Activated T-helper 2 cell treated with anti-CD3 and anti-CD28 coated beads, Interferon-gamma antibody, Interleukin-2, Interleukin-4, amounts not matched to agents 10 μg/mL and 5 μg/mL and 100 μg/mL, durations not matched to agents 14 hours and 24 hours and 36 hours (primary cell): ENCODE measurements at regions of chr22 and their contacts with region 1.

Region 1: DNA sequence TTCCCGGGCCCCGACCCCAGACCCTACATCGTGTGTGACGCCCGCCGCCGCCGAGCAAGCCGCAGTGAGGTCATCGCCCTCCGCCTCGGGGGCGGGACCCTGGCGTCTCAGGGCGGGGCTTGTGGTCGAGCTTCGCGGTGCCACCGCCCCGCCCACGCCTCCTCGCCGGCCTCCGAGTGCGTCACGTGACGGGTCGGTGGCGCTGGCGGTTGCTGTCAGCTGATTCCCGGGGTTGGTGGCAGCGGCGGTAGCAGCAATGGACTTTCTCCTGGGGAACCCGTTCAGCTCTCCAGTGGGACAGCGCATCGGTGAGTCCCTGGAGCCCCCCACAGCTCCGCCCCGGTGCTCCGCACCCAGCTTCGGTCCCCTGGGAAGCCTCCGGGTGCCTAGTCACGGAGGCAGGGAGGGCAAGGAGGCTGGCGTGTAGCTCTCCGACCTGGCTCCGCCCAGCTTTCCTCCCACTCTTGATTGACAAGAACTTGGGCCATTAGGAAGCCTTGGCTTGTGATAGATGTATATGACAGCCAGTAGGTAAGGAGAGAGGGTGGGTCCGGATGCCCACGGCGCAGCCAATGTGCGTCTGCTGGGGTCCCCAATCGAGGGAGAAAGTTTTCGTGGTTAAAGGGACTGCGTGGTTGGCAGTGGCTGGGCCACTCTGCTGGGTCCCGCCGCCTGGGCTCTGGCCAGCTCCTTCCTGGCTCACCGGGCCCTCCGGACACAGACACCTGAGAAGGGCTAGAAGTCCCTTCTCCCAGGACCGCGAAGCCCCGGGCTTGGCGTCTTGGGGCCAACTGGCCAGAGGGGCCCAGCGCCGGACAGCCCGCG is at the start of gene TOM1:
- DNase-seq: peak; percentile 95
- H3K4me3 Mint-ChIP-seq: peak within 1 kb of the TSS; percentile 84
- H3K27ac Mint-ChIP-seq: peak within 1 kb of the TSS; percentile 90
- H3K4me1 Mint-ChIP-seq: peaks cover 42% of the 10 kb centered on the region
- H3K27me3 Mint-ChIP-seq: no peaks in the 10 kb centered on the region
- total RNA-seq, gene TOM1: 21.2 and 23.6 TPM in 2 replicates

Region 2: DNA sequence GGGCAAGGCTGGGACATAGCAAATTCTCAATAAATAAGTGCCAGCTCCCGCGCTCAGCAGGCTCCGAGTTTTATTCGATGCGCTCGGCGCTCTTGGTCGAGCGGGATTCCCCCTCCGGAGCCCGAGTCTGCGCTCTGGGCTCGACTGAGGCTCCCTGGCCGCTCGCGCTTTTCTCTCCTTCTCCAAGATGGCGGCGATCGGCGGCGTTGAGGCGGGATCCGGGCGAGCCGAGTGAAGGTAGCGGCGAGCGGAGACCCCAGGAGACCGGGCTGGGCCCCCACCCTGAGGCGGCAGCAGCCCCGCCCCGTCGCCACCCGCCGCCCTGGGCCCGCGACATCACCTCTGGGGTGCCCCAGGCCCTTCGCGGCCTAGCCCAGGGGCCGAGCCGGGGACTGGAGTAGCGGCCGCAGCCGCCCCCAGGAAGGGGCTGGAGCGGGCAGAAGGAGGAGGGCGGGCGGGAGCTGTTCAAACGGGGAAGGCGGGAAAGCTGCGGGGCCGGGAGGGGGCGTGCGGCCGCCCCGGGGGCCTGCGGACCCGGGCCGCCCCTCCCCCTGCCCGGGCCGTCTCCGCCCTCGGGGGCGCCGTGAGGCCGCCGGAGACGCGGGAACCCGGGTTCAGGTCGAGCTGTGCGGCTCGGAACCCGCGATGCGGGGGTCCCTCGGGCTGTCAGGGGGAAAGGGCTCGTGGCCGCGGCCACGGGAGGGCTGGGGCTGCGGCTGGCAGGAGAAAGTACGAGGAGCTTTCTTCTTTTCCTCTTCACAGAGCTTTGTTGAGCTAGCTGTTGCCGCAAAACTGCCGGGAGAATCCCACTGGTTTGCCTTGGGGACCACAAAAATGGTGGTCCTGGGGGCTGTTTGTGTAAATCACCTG is 42.3 kb before region 1 on chr22 and contains the start of gene HMGXB4:
- intact Hi-C with region 1: loop called (anchors 2 kb)
- DNase-seq: peak; percentile 83
- H3K4me3 Mint-ChIP-seq: peak within 1 kb of the TSS; percentile 90
- H3K27ac Mint-ChIP-seq: peak within 1 kb of the TSS; percentile 92
- H3K4me1 Mint-ChIP-seq: peaks cover 34% of the 10 kb centered on the region
- H3K27me3 Mint-ChIP-seq: no peaks in the 10 kb centered on the region
- total RNA-seq, gene HMGXB4: 41.8 and 42.3 TPM in 2 replicates

Region 3: DNA sequence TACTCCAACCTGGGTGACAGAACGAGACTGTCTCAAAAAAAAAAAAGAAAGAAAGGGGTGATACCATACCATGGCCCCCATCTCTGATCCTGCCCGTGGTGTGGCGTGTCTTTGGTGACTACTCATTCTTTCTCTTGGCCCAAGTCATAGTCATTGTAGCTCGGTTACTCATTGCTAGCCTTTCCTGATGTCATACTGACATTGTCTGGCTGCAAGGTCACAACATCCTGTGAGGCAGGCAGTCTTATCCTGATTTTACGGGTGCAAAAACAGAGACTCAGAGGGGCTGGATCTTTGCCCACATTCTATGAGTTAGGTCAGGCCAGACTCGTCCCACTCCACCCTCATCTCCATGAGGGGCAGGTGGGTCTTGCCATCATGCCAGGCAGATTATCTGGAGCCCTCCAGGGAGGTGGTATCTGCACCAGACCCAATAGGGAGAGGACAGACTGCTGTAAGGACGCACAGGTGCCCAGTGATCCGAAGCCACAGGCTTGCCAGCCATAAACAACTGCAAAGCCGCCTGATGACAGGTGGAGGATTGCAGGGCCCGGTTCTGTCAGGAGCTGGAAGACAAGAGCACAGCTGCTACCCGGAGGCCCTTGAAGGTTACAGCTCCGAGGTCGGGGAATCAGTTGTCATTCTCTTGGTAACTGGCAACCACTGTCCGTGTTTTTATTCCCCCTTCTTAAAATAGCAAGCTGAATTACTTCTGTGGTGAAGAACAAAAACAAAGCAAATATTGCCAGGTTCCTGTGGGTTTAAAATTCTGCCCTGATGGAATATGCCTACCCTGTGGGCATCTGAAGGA is 13.6 kb after region 1 on chr22:
- intact Hi-C with region 1: loop called (anchors 1 kb)
- DNase-seq: no peak
- H3K4me3 Mint-ChIP-seq: no peak overlapping the region
- H3K27ac Mint-ChIP-seq: peak overlapping the region; percentile 74
- H3K4me1 Mint-ChIP-seq: peaks cover 62% of the 10 kb centered on the region
- H3K27me3 Mint-ChIP-seq: no peaks in the 10 kb centered on the region